ENCODE measurements at regions of chr12 and their contacts with region 1.

Region 1: DNA sequence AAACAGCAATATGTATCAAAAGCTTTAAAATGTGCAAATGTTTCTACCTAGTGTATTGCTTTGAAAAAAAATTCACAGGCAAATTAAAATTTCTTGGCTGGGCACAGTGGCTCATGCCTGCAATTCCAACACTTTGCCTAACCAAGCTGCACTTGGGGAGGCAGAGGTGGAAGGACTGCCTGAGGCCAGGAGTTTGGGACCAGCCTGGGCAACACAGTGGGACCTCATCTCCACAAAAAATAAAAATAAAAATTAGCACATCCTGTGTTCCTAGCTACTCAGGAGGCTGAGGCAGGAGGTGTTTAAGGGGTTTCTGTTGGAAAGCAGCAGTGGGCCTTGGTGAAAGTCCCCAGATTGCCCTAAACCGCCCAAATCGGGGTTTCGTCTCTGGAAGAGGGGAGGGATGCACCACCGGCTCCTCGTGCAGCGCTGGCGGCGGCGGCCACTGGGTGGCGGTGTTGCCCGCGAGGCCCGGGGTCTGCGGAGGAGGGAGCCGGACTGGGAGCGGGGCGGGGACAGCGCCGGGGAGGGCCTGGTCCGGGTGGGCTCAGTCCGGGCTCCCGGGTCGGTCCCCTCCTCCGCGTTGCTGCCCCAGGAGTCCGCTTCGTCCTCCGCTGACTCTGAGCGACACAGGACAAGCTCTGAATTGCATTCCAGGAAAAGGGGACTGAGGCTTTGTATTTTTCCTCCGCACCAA is 265.6 kb downstream of the AACS start:
- DNase-seq: peak; percentile 58 to 91 (median 76)
- H3K4me3 ChIP-seq: peak overlapping the region; percentile 28 to 79 (median 63)
- H3K27ac ChIP-seq: peak overlapping the region in 41 of 59 donors; percentile 1 to 83 (median 57)
- H3K27me3 ChIP-seq: peaks cover 0 to 3% (median 0%) of the 10 kb centered on the region in 45 donors
- CTCF ChIP-seq: peak; percentile 64 to 98 (median 88)

Region 2: GRCh38 chr12:125402874-125403789 is 72.3 kb after region 1 on chr12:
- intact Hi-C with region 1: loop called in 1 of 2 experiments (anchors 5 kb)
- DNase-seq: no peak
- H3K4me3 ChIP-seq: no peak overlapping the region
- H3K27ac ChIP-seq: peak overlapping the region in 5 of 59 donors; percentile 3 to 67 (median 36)
- H3K27me3 ChIP-seq: no peaks in the 10 kb centered on the region
- CTCF ChIP-seq: peak; percentile 33 to 69 (median 55)

Region 3: DNA sequence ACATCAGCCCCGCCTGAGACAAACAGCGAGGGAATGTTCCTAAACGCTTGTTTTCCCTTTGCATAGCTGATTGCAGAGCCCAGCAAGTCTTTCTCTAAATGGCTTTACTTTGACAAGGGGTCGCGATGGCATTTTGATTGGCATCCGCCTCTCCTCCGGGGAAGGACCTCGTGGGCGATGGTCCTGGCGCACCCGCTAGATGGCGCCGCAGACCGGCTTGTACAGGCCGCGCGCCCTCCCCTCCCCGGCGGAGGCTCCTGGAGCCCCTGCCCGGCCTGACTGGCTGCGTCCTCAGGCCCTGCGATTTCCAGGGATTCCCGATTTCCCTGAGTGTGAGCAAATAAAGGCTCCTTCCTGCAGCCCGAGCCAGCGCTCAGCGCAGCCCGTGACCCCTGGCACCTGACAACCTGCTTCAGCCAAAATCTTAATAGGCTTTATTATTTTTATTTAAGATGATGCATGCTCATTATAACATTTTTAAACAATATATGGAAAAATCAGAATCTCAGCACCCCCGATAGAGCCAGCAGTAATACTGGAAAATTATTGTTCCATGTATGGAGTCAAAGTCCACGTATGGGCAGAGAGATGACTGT is 202.7 kb after region 1 on chr12:
- intact Hi-C with region 1: loop called (anchors 2 to 5 kb)
- DNase-seq: peak; percentile 19 to 84 (median 70)
- H3K4me3 ChIP-seq: peak overlapping the region in 42 of 59 donors; percentile 1 to 56 (median 34)
- H3K27ac ChIP-seq: peak overlapping the region in 14 of 59 donors; percentile 8 to 78 (median 34)
- H3K27me3 ChIP-seq: no peaks in the 10 kb centered on the region
- CTCF ChIP-seq: peak; percentile 36 to 98 (median 88)

Region 4: DNA sequence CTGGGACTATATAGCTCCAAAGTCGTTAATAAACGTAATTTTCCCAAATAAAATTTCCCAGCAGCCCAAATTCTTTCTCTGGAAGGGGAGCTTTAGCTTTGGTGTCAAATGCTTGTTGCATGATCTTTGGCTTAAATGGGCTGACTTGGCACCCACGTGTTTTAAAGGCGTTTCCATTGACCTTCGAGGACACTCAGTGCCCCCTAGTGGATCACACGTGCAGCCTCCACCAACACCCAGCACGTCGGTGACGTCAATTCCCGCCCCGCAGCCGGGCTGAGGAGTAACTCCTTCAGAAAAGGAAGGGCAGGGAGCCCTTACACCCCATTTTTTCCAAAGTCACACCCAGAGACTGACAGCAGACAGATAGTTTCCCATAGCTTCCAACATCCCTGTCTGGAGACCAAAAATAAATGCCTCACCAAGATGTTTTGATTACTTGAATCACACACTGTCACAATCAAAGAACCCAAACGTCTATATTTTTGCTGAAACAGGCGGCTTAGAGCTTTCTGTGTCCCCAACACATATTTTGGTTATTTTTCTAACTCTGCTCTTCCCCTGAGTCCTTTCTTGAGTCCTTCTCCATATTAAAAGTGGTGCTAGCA is 442.3 kb after region 1 on chr12:
- intact Hi-C with region 1: loop called in 1 of 2 experiments (anchors 10 kb)
- DNase-seq: peak in 2 of 10 donors; percentile 8 to 18
- H3K4me3 ChIP-seq: no peak overlapping the region
- H3K27ac ChIP-seq: no peak overlapping the region
- H3K27me3 ChIP-seq: peaks cover 0 to 4% (median 0%) of the 10 kb centered on the region in 45 donors
- CTCF ChIP-seq: peak in 50 of 56 donors; percentile 5 to 60 (median 36)

Region 5: DNA sequence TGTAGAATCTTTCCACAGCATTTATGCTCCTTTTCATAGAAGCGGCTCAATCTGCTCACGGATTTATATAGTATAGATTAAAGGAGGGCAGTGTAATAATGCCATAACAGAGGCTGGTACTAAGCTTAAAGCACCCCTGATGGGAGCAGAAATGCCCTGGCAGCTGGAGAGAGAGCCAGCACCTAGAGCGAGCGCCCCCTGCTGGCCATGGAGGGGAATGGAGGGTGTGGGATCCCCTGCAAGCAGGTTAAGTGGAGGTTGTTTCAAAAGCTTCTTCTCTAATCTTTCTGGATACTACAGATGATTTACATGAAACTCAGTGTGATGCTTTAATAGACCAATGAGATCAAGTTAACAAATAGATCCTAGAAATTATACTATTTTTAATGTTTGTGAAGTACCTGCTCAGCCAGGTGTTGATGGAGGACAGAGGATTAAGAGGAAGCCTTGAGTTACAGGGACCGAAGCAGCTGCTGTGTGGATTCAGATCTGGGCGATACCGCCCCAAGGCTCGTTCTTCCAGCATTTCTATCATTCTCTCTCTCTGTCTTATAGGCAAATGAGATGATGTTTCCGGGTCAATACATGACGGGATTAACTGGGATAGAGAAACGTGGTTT is 1416.8 kb after region 1 on chr12:
- intact Hi-C with region 1: loop called in 1 of 2 experiments (anchors 10 kb)
- DNase-seq: peak in 8 of 10 donors; percentile 14 to 70 (median 46)
- H3K4me3 ChIP-seq: no peak overlapping the region
- H3K27ac ChIP-seq: no peak overlapping the region
- H3K27me3 ChIP-seq: no peaks in the 10 kb centered on the region
- CTCF ChIP-seq: peak; percentile 54 to 96 (median 90)

Region 6: GRCh38 chr12:126874427-126875026 is 1543.7 kb after region 1 on chr12:
- intact Hi-C with region 1: loop called in 1 of 2 experiments (anchors 10 kb)
- DNase-seq: peak; percentile 37 to 83 (median 72)
- H3K4me3 ChIP-seq: no peak overlapping the region
- H3K27ac ChIP-seq: no peak overlapping the region
- H3K27me3 ChIP-seq: peaks cover 0 to 7% (median 0%) of the 10 kb centered on the region in 45 donors
- CTCF ChIP-seq: peak; percentile 60 to 96 (median 92)